ENCODE measurements at regions of chr5 and their contacts with region 1.

Region 1: DNA sequence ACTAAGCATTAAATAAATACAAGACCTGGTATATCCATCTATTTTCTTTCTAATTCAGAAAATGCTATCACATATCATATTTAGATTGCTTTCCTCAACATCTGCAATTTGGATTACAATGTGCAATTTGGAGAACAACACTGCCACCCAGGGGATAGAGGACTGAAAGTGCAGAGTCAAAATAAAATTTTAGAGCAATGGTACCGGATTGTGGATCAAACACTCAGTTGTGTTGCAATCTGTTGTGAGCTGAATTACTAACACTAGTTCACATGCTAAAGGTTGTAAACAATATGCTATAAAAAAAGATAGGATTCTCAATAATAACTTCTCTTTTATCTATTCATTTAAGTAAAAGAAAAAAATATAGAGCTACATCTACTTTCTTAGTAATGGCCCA is 11.9 kb upstream of the SRFBP1 start:
- DNase-seq: no peak
- ATAC-seq: peak; percentile 62; the same call in 1 of the 2 replicates
- H3K4me3 ChIP-seq: no peak overlapping the region
- H3K27ac ChIP-seq: no peak overlapping the region
- H3K4me1 ChIP-seq: no peaks in the 10 kb centered on the region
- H3K27me3 ChIP-seq: no peaks in the 10 kb centered on the region; the same call in 1 of the 2 replicates
- CTCF ChIP-seq: peak; percentile 65; the same call in 1 of the 2 replicates

Region 2: DNA sequence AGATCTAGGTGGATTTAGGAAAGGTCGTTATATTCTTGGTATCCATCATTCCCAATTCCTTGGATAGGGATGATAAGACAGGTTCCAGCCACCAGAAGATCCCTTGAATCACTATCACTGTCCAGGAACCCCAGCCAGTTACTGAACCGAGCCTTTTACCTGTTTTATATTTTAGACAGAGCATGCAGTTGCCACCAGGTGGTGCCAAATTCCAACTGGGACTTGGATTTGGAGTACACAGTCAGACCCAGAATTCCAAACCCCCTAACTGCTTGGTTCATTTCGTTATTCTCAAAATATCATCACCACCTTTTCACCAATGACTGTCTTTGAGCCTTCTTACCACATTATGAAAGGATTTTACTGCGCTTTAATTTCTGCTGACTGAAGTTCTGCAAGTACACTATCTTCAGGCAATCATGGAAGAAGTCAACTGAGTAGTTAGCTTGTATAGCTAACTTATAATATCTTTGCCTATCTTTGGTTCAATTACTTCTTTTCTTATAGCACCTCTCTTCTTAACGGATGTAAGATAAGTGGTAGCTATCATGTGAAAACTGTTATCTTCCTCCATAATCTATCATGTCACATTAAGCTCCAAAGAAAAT is 1293.9 kb before region 1 on chr5:
- CTCF ChIA-PET with region 1: no interaction called
- POLR2A ChIA-PET with region 1: no interaction called
- in situ Hi-C with region 1: no loop called
- intact Hi-C with region 1: loop called (anchors 10 kb)
- DNase-seq: no peak
- ATAC-seq: no peak
- H3K4me3 ChIP-seq: no peak overlapping the region
- H3K27ac ChIP-seq: no peak overlapping the region
- H3K4me1 ChIP-seq: no peaks in the 10 kb centered on the region
- H3K27me3 ChIP-seq: no peaks in the 10 kb centered on the region
- CTCF ChIP-seq: peak; percentile 80

Measured in Panc1 (cell line).